Mammary epithelial cell (primary cell): ENCODE measurements at regions of chr1 and their contacts with region 1.

Region 1: DNA sequence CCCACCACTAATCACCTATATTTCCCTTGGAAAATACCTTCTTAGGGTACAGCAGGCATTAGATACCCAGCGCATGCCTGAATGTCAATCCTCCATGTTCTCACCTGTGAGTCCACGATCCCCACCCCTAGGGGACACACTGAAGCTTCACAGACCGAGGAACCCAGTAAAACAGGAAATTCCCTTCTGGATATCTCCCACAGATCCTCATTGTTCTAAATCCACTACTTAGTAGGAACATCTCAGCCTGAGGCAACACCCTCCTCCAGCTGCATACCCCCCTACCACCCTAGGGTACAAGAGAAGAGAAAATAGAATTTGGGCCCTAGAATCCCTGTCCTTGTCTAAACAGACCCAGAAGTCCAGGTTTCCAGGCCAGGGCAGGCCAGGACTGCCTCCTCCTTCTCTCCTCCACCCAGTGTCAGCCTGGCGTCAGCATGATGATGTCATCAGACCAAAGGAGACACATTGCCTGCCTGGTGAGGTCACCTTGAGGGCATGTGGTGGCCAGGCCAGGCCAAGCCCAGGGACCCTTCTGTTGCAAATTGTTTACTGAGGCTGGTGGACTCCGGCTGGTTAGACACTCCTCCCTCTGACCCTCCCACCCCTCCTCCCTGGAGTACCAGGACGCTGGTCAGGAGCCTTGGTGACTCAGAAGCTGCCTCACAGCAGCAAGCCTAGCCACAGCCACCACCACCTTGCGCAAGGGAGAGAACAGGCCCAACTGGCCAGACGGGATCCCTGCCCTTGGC is 6.2 kb downstream of the NECTIN4 start:
- DNase-seq: peak; percentile 98
- H3K4me3 ChIP-seq: no peak overlapping the region
- H3K27ac ChIP-seq: peak overlapping the region; percentile 86
- H3K4me1 ChIP-seq: peaks cover 56% of the 10 kb centered on the region
- H3K27me3 ChIP-seq: no peaks in the 10 kb centered on the region
- CTCF ChIP-seq: no peak

Region 2: DNA sequence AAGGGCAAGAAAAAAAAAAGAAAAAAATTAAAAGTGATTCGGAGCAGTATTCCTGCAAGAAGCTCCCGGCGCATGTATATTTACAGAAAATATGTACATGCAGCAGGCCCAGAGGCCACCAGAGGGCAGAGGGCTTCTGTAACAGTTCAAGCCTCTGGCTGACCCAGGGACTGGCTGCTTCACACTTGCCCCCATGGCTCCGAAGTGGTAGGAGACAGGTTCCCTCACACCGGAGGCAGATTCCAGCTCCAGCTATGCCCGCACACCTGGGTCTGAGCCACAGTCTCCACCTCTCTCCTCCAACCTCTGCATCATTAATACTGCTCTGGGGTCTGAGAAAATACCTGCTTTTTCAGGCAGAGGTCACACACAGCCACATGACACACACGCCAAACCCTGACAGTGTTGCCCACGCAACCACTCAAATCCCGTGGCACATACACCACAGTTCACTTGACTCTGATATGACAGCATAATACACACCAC is 11.2 kb before region 1 on chr1:
- CTCF ChIA-PET with region 1: no interaction called
- dilution Hi-C with region 1: no loop called
- in situ Hi-C with region 1: no loop called
- intact Hi-C with region 1: loop called (anchors 1 kb)
- DNase-seq: no peak
- H3K4me3 ChIP-seq: no peak overlapping the region
- H3K27ac ChIP-seq: no peak overlapping the region
- H3K4me1 ChIP-seq: peaks cover 45% of the 10 kb centered on the region
- H3K27me3 ChIP-seq: no peaks in the 10 kb centered on the region
- CTCF ChIP-seq: peak; percentile 64 to 71